SK-N-SH (cell line): ENCODE measurements at regions of chr13 and their contacts with region 1.

Region 1: GRCh38 chr13:52128714-52129700 is at the start of gene NEK5:
- DNase-seq: peak; percentile 90
- H3K4me3 ChIP-seq: peak within 1 kb of the TSS; percentile 71
- H3K27ac ChIP-seq: no peak within 1 kb of the TSS
- H3K4me1 ChIP-seq: peaks cover 0 to 11% of the 10 kb centered on the region in 2 experiments; a peak in 1 of 4 replicates
- H3K27me3 ChIP-seq: no peaks in the 10 kb centered on the region
- CTCF ChIP-seq: peak; percentile 68
- EP300 ChIP-seq: no peak
- RAD21 ChIP-seq: peak; percentile 51
- polyA plus RNA-seq, gene NEK5: 0.07 and 0.13 TPM in 2 replicates

Region 2: GRCh38 chr13:51814825-51815650 is 314.0 kb before region 1 on chr13:
- CTCF ChIA-PET with region 1: interaction called, 51 read pairs
- POLR2A ChIA-PET with region 1: no interaction called
- DNase-seq: peak; percentile 79
- H3K4me3 ChIP-seq: peak overlapping the region; percentile 23 to 47; a peak in 3 of 4 replicates
- H3K27ac ChIP-seq: no peak overlapping the region
- H3K4me1 ChIP-seq: peaks cover 0 to 14% of the 10 kb centered on the region in 2 experiments; a peak in 1 of 4 replicates
- H3K27me3 ChIP-seq: no peaks in the 10 kb centered on the region
- CTCF ChIP-seq: peak; percentile 83
- EP300 ChIP-seq: no peak
- RAD21 ChIP-seq: peak; percentile 83

Region 3: GRCh38 chr13:51990791-51991190 is 138.2 kb before region 1 on chr13:
- CTCF ChIA-PET with region 1: interaction called, 10 read pairs
- POLR2A ChIA-PET with region 1: no interaction called
- DNase-seq: no peak
- H3K4me3 ChIP-seq: no peak overlapping the region
- H3K27ac ChIP-seq: no peak overlapping the region
- H3K4me1 ChIP-seq: no peaks in the 10 kb centered on the region; a peak in 1 of 4 replicates
- H3K27me3 ChIP-seq: no peaks in the 10 kb centered on the region
- CTCF ChIP-seq: no peak
- EP300 ChIP-seq: no peak
- RAD21 ChIP-seq: no peak

Region 4: DNA sequence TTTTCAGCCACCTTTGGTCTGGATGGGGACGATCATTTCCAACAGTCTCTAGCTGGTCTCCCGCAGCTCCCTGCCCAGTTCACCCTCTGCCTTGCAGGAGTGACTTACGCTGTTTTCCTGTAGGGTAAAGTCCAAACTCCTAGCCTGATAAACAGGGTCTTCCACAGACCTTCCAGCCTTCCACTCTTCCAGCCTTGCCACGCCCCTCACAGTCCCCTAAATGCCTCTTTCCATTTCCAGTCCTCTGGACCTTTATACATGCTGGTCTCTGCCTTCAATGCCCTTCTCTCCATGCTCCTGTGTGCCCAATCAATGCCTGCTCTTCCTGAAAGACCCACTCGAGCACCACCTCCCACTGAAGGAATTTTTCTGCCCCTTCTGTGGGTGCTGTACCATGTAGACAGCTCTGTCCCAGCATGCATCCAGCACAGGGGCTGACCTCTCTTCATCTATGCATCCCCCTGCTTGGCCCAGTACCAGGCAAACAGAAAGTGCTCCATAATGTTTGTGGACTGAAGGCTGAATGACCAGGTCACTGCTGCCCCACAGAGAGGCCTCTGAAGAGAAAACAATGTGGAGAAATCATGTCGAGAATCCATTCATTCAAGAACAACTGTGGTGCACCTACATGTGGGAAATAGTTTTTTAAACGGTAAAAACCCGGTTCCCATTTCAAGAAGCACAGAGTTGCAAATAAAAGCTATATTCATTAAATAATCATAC is 122.3 kb before region 1 on chr13:
- CTCF ChIA-PET with region 1: interaction called, 35 read pairs
- POLR2A ChIA-PET with region 1: no interaction called
- DNase-seq: no peak
- H3K4me3 ChIP-seq: no peak overlapping the region
- H3K27ac ChIP-seq: no peak overlapping the region
- H3K4me1 ChIP-seq: peaks cover 3 to 7% of the 10 kb centered on the region in 2 experiments; a peak in 3 of 4 replicates
- H3K27me3 ChIP-seq: no peaks in the 10 kb centered on the region
- CTCF ChIP-seq: no peak
- EP300 ChIP-seq: no peak
- RAD21 ChIP-seq: no peak

Region 5: GRCh38 chr13:52104624-52105023 is 24.4 kb before region 1 on chr13:
- CTCF ChIA-PET with region 1: interaction called, 21 read pairs
- POLR2A ChIA-PET with region 1: no interaction called
- DNase-seq: no peak
- H3K4me3 ChIP-seq: no peak overlapping the region
- H3K27ac ChIP-seq: no peak overlapping the region
- H3K4me1 ChIP-seq: no peaks in the 10 kb centered on the region
- H3K27me3 ChIP-seq: no peaks in the 10 kb centered on the region
- CTCF ChIP-seq: no peak
- EP300 ChIP-seq: no peak
- RAD21 ChIP-seq: no peak

Region 6: DNA sequence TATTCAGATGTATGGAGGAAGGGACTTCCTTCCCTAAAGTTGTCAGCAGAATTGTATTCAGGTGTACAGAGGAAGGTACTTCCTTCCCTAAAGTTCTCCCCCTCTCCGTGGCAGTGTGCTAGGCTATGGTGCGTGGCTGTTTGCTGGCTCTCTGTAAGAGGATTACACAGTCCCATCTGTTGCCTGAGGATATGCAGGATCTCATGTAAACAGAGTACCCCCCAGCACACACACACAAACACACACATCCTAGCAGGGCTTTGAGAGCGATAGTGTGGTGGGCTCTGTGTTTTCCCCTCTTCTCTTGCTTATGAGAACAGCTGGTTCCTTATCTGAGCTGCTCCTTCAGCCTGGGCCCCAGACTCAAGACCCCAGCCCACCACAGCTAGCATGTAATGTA is 10.4 kb before region 1 on chr13:
- CTCF ChIA-PET with region 1: interaction called, 36 read pairs
- POLR2A ChIA-PET with region 1: no interaction called
- DNase-seq: no peak
- H3K4me3 ChIP-seq: no peak overlapping the region
- H3K27ac ChIP-seq: no peak overlapping the region
- H3K4me1 ChIP-seq: no peaks in the 10 kb centered on the region
- H3K27me3 ChIP-seq: no peaks in the 10 kb centered on the region; the same call in 1 of the 2 replicates
- CTCF ChIP-seq: no peak
- EP300 ChIP-seq: no peak
- RAD21 ChIP-seq: no peak

Region 7: DNA sequence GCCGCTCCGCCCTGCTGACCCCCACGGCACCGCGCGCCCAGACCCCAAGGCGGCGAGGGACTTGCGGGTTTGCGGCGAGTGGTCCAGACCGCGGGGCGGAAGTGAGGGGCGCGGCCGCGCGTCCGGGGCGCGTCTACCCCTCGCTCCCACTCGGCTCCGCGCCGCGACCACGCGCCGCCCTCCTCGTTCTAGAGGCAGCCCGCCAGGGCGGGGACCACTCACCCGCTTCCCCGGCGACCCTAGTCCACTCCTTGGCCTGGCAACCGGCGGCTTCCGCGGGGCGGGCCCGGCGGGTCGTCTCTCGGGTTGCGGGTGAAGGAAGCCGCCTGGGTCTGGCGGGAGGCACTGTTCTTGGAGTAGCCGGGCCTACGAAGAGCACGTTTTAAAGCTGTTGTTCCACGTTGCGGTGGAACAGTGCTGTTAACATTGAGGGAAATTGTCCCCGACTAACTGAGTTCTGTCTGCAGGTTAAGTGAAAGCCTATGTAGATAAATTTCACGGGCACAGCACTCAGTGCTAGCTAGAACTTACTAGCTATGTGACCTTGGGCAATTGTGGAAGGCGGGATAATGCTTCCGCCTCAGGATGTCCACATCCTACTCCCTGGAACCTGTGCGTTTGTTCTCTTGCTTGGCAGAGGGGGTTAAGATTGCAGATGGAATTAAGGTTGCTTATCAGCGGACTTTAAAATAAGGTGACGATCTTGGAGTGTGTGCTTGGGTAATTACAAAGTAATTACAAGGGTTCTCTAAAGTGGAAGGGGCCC is 30.5 kb after region 1 on chr13 and contains the start of gene NEK3:
- CTCF ChIA-PET with region 1: interaction called, 11 read pairs
- POLR2A ChIA-PET with region 1: no interaction called
- DNase-seq: peak; percentile 93
- H3K4me3 ChIP-seq: peak within 1 kb of the TSS; percentile 71 to 83
- H3K27ac ChIP-seq: peak within 1 kb of the TSS; percentile 59 to 72
- H3K4me1 ChIP-seq: peaks cover 3 to 22% of the 10 kb centered on the region in 2 experiments; a peak in 2 of 4 replicates
- H3K27me3 ChIP-seq: no peaks in the 10 kb centered on the region
- CTCF ChIP-seq: no peak
- EP300 ChIP-seq: no peak
- RAD21 ChIP-seq: no peak
- polyA plus RNA-seq, gene NEK3: 12.7 and 19.5 TPM in 2 replicates

Region 8: GRCh38 chr13:53151336-53152056 is 1022.5 kb after region 1 on chr13:
- CTCF ChIA-PET with region 1: no interaction called
- POLR2A ChIA-PET with region 1: no interaction called
- DNase-seq: peak; percentile 54
- H3K4me3 ChIP-seq: peak overlapping the region in 1 of 2 experiments; percentile 51; a peak in 1 of 4 replicates
- H3K27ac ChIP-seq: no peak overlapping the region
- H3K4me1 ChIP-seq: no peaks in the 10 kb centered on the region; a peak in 1 of 4 replicates
- H3K27me3 ChIP-seq: no peaks in the 10 kb centered on the region
- CTCF ChIP-seq: peak; percentile 82
- EP300 ChIP-seq: no peak
- RAD21 ChIP-seq: peak; percentile 89